ENCODE measurements at regions of chr1 and their contacts with region 1.

Region 1: GRCh38 chr1:157240495-157241184 is 102.4 kb upstream of the ETV3 start:
- DNase-seq: peak; percentile 99
- ATAC-seq: peak; percentile 98
- H3K4me3 ChIP-seq: peak overlapping the region in 2 of 3 experiments; percentile 15 to 39; a peak in 2 of 6 replicates
- H3K27ac ChIP-seq: peak overlapping the region; percentile 94
- H3K4me1 ChIP-seq: peaks cover 67% of the 10 kb centered on the region
- H3K27me3 ChIP-seq: no peaks in the 10 kb centered on the region
- CTCF ChIP-seq: peak; percentile 38
- EP300 ChIP-seq: peak; percentile 87 to 98; a peak in 3 of 4 replicates
- POLR2A ChIP-seq: peak; percentile 84 to 91
- RAD21 ChIP-seq: no peak

Region 2: DNA sequence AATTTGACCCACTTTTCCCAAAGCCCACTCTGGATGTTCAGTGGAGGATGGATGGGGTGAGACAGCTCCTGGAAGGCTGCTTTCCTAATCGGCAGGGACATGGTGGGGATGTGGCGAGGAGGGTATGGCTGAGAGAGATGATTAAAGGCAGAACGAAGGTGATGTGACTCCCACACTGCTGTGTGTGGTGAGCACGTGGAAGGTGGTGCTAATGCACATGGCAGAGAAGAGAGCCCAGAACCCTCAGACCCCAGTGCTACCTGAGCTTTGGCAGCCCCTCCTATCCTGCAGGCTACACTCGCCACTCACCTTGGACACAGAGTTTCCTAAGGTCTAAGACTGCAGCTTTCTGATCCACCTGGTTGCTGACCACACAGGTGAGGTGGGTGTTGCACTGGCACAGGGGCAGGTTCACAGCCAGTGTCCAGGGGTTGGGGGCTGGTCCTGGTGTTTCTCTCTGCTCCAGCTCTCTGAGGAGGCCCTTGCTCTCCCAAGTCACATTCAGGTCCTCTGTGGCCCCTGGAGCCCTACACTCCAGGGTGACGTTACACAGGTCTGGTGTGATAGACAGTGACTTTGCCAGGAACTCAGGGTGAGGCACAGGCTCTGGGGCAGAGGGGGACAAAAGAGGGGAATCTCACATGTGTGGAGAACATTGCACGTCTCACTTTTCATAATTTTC is 48.9 kb after region 1 on chr1:
- CTCF ChIA-PET with region 1: no interaction called
- POLR2A ChIA-PET with region 1: interaction called, 12 read pairs
- in situ Hi-C with region 1: no loop called
- intact Hi-C with region 1: loop called (anchors 10 kb)
- DNase-seq: no peak
- ATAC-seq: no peak
- H3K4me3 ChIP-seq: no peak overlapping the region
- H3K27ac ChIP-seq: no peak overlapping the region
- H3K4me1 ChIP-seq: peaks cover 31% of the 10 kb centered on the region
- H3K27me3 ChIP-seq: peaks cover 0 to 2% of the 10 kb centered on the region in 2 experiments; a peak in 3 of 5 replicates
- CTCF ChIP-seq: no peak
- EP300 ChIP-seq: no peak
- POLR2A ChIP-seq: no peak
- RAD21 ChIP-seq: no peak

Measured in HepG2 (cell line).